ENCODE measurements at regions of chr2 and their contacts with region 1.

Region 1: DNA sequence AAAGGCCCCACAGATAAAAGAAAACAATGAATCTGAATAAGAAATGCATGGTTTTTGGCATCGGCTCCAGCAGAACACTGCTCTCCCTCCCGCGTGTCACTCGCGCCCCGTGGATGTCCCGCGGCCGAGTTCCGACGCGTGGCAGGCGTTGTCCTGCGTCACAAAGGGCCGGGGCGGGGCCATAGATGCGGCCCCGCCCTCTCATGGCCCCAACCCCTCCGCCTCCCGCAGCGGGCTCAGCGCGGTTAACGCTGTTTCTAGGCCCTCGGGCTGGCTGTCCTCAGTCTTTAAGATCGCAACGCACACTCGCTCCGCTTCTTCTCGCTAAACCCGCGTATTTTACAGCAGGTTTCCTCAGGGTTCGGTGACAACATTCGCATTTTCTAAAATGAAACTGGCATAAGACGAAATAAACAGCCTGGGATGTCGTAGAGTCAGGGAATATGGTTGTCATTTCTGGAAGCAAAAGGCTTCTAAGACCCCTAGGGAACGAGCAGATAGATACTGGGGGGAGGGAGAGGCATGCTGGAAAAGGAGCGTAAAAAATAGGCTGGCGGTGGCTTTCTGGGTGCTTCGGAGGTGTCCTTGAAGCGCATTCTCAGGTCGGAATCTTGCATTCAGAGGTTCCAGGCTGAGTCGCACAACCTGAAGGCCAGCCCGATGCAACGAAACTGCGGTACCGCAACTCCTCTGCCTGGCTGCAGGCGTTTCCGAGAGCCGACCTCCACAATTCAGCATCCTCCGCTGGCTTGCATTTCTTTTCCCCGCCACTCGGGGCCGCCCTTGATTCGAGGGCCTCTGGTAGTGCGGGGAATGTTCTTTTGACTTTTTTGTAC is at the start of gene FKBP7:
- DNase-seq: no peak
- ATAC-seq: peak; percentile 85
- H3K4me3 ChIP-seq: peak within 1 kb of the TSS; percentile 71 to 89
- H3K27ac ChIP-seq: peak within 1 kb of the TSS; percentile 81
- H3K4me1 ChIP-seq: peaks cover 25% of the 10 kb centered on the region
- H3K27me3 ChIP-seq: no peaks in the 10 kb centered on the region
- CTCF ChIP-seq: peak; percentile 94
- total RNA-seq, gene FKBP7: 1.8 TPM

Region 2: DNA sequence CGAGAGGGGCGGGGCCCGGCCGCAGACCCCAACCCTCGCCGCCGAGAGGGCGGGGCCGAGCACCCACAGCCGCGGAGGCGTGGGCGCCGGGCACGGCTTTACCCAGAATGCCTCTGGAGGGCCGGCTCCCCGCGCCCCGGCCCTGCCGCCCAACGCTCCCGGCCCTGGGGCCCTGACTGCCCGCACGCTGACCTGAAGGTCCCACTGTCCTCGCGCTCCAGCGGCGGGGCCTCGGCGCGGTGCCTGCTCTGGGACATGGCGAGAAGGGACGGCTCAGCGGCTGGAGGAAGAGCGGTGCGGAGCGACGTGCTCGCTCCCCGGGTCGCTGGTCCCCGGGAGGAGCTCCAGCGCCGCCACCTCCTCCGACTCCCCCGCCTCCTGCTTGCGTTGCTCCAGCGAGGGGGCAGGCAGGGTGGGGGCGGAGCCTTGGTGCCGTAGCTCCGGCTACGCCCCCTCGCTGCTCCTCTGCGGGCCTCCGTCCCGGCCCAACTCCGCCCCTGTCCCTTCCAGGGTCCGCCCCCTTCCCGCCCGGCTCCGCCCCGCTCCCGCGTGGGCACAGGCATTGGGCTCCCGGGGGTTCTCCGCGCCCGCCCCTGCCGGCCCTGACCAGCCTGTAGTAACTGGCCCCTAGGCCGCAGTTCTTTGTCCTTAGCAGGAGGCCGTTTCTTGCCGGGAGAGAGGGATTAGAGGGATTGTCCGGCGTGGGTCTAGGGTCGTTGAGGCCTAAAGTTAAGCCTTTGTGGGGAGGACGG is 27.7 kb before region 1 on chr2 and contains the starts of genes PJVK and PRKRA:
- CTCF ChIA-PET with region 1: no interaction called
- POLR2A ChIA-PET with region 1: no interaction called
- in situ Hi-C with region 1: no loop called
- intact Hi-C with region 1: loop called (anchors 2 kb)
- DNase-seq: peak; percentile 78
- ATAC-seq: peak; percentile 97
- H3K4me3 ChIP-seq: peak within 1 kb of the TSS; percentile 88 to 95
- H3K27ac ChIP-seq: peak within 1 kb of the TSS; percentile 96
- H3K4me1 ChIP-seq: peaks cover 9% of the 10 kb centered on the region; the same call in 1 of the 2 replicates
- H3K27me3 ChIP-seq: no peaks in the 10 kb centered on the region
- CTCF ChIP-seq: no peak
- total RNA-seq, gene PJVK: 3.7 TPM
- total RNA-seq, gene PRKRA: 59.4 TPM

Region 3: GRCh38 chr2:178522950-178523595 is 44.4 kb after region 1 on chr2:
- CTCF ChIA-PET with region 1: no interaction called
- POLR2A ChIA-PET with region 1: no interaction called
- in situ Hi-C with region 1: no loop called
- intact Hi-C with region 1: loop called (anchors 5 kb)
- DNase-seq: peak; percentile 65
- ATAC-seq: peak; percentile 99
- H3K4me3 ChIP-seq: peak overlapping the region; percentile 99
- H3K27ac ChIP-seq: peak overlapping the region; percentile 96
- H3K4me1 ChIP-seq: peaks cover 7% of the 10 kb centered on the region; the same call in 1 of the 2 replicates
- H3K27me3 ChIP-seq: no peaks in the 10 kb centered on the region
- CTCF ChIP-seq: peak; percentile 96

Measured in Panc1 (cell line).